Activated T-helper 2 cell treated with anti-CD3 and anti-CD28 coated beads, Interferon-gamma antibody, Interleukin-2, Interleukin-4, amounts not matched to agents 10 μg/mL and 5 μg/mL and 100 μg/mL, durations not matched to agents 14 hours and 24 hours and 36 hours (primary cell): ENCODE measurements at regions of chr21 and their contacts with region 1.

Region 1: DNA sequence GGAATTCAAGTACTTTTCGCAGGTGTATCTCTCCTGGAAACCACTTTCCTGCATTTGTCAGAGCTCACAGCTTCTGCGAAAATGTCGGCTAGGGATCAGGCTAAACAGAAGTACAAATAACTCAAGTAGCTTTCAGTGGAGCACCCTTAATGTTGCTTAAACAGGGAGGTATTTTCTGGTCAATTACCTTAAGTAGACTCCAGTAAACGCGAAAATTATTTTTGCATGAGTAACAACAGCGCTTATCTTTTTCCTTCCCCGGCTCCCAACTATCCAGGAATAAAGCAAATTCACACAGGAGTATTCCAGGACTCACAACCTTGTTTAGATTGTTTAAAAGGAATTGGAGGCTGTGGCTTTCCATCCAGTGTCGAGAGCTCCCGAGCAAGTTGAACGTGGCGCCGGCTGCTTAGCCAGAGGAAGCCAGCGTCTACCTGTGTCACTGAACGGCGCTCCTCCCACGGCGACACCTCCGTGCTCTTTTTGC is 7.3 kb upstream of the SIM2 start:
- DNase-seq: no peak
- H3K4me3 Mint-ChIP-seq: no peak overlapping the region
- H3K27ac Mint-ChIP-seq: no peak overlapping the region
- H3K4me1 Mint-ChIP-seq: peaks cover 4% of the 10 kb centered on the region
- H3K27me3 Mint-ChIP-seq: peaks cover 84% of the 10 kb centered on the region

Region 2: DNA sequence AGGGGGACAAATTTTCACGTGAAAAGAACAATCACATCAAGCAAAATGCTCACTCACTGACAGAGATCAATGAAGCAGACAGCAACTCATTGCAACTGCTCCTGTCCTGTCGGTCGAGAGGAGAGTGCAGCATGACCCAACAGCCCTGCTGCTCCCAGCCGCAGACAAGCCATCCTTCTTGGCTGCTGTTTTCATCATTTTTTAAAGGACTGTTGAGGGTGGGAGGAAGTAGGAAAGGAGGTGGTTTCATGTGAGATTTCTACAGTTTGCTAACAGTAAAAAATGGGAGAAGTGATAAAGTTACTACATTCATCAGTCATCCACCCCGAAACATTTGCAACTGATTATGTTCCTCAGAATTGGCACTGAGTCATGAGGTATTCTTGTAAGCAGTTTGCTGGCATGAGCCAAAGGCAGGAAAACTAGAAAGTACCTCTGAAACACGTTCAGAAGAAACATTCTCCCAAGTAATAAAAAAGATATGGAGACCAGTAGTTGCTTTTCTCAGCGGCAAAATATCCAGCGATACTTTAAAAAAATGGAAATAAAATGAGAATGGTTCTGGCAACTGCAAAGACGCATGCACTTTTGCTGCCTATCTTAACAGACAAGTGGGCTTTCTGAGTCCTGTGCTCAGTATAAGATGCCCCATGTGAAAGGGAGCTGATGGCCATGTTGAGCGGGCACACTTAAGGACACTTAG is 139.7 kb before region 1 on chr21:
- intact Hi-C with region 1: no loop called
- DNase-seq: no peak
- H3K4me3 Mint-ChIP-seq: no peak overlapping the region
- H3K27ac Mint-ChIP-seq: no peak overlapping the region
- H3K4me1 Mint-ChIP-seq: peaks cover 9% of the 10 kb centered on the region
- H3K27me3 Mint-ChIP-seq: no peaks in the 10 kb centered on the region

Region 3: DNA sequence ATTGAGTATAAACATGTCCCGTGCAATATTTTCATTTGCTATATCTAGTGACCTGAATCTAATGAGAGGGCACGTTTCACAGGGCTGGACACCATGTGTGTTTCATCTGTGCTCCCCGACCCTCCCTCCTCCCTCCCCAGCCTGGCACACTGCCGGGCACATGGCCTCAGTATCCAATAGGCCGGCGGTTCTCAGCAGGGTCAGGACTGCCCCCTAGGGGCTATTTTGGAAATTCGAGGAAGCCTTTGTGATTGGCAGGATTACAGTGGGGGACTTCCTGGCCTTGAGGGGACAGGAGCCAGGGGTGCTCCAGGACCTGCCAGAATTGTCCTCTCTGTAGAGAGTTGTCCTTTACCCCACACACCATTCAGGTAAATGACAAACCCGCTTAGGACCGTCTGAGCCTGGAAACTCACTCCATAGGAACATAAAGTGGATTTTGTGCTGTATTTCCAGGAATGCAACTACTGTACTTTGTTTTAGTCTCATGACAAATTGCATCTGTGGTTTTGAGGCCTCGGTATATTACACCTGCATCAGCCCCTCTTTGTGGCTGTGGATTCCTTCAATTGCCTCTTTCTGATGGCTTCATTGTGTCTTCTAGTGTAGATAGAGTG is 102.1 kb before region 1 on chr21:
- intact Hi-C with region 1: no loop called
- DNase-seq: peak; percentile 23
- H3K4me3 Mint-ChIP-seq: no peak overlapping the region
- H3K27ac Mint-ChIP-seq: no peak overlapping the region
- H3K4me1 Mint-ChIP-seq: peaks cover 5% of the 10 kb centered on the region
- H3K27me3 Mint-ChIP-seq: no peaks in the 10 kb centered on the region

Region 4: DNA sequence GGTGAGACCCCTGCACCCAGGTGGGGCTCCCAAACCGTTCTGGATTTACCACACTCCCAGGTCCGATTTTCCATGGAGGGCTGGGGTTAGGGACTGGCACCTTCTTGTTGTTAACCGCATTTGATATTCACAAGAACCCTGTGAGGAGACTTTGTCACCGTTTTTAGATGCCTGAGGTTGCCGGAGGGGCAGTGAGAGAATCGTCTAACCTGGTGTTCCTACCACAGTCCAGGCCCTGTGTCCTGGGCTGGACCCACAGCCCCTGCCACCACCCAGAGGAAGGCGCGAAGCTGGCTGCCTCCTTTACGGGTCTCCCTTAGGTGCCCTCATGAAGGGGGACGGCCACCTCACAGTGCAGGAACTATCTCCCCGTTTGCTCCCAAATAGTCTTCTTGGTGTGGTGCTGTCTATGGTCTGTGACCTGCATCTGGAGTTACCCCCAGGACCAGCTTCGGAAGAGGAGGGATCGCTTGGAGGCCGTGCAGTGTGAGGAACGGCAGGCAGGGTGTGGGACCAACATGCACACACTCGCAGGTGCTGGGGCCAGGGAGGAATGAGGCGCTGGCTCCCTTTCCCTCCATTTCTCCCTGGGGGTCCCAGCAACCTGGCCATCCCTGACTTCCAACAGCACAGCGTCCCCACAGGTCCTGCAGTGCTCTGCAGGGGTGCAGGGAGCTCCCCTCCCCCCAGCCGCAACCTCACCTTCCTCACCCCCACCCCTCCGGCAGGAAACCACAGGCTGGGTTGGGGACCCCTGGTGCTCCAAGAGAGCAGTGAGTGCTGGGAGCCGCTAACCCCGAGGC is 14.3 kb after region 1 on chr21:
- intact Hi-C with region 1: loop called (anchors 2 kb)
- DNase-seq: no peak
- H3K4me3 Mint-ChIP-seq: no peak overlapping the region
- H3K27ac Mint-ChIP-seq: no peak overlapping the region
- H3K4me1 Mint-ChIP-seq: peaks cover 6% of the 10 kb centered on the region
- H3K27me3 Mint-ChIP-seq: peaks cover 83% of the 10 kb centered on the region

Region 5: DNA sequence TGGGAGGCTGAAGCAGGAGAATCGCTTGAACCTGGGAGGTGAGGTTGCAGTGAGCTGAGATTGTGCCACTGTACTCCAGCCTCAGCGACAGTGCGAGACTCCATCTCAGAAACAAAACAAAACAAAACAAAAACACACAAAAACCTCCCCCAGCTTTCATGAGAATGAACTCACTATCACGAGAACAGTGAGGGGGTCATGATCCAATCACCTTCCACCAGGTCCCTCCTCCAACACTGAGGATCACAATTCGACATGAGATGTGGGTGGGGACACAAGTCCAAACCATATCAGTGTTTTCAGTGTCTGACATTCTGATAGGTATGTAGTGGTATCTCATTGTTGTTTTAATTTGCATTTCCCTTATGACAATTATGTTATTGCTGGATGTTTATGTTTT is 643.5 kb after region 1 on chr21:
- intact Hi-C with region 1: no loop called
- DNase-seq: no peak
- H3K4me3 Mint-ChIP-seq: no peak overlapping the region
- H3K27ac Mint-ChIP-seq: no peak overlapping the region
- H3K4me1 Mint-ChIP-seq: peaks cover 3% of the 10 kb centered on the region
- H3K27me3 Mint-ChIP-seq: peaks cover 2% of the 10 kb centered on the region